A673 (cell line): ENCODE measurements at regions of chr6 and their contacts with region 1.

Region 1: DNA sequence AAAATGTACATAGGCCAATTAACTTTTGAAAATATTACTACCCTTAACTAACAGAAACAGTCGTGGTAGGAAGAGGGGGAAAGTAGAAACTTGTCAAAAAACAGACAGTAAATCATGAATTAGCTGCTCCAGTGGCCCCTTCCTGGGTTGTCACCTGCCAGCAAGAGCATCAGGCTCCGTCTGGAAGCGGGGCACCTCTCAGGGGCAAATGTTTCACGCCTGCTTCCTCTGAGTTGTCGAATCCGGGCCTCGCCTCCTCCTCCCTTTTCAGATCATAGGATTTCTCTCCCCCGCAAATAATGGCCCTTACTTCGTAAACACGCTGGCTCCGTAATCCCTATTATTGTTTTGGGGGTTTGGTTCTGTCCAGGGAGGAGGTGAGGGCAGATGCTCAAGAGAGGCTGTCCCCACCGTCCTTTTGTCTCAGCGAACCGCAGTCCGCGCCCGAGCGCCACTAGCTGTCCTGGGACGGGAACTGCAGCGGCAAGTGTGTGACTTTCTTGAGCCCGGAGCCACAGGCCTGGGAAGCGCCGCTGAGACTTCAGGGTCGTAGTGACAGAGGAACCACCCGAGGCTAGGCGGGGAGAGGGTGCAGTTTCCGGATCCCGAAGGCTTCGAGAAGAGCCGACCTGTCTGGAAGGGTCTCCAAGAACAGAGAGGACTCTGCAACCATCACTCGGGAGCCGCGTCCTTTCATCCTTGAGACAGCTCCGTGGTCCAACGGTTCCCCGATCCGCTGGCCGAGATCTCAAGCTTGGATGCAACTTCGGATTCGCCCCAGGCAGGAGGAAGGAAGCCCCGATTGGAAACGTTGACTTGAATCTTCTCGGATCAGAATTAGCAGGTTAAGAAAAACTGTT is 214.5 kb upstream of the ZNF184 start:
- DNase-seq: peak; percentile 94
- H3K4me3 ChIP-seq: peak overlapping the region; percentile 57
- H3K27ac ChIP-seq: peak overlapping the region; percentile 66
- H3K4me1 ChIP-seq: no peaks in the 10 kb centered on the region
- H3K27me3 ChIP-seq: no peaks in the 10 kb centered on the region
- CTCF ChIP-seq: peak; percentile 84

Region 2: DNA sequence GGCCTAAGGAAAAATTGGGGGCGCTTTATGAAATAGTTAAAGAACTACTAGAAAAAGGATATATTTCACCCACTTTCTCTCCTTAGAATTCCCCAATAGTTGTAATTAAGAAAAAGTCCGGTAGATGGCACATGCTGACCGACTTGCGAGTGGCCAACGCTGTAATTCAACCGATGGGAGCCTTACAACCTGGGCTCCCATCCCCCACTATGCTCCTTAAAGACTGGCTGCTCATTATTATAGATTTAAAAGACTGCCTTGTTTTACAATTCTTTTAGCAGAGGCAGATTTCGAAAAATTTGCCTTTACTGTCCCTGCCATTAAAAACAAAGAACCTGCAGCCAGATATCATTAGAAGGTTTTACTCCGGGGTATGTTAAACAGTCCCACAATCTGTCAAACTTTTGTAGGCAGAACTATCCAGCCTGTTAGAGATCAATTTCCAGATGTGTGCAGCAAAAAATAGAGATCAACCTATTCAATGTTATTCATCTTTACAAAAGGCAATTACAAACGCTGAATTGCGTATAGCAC is 498.4 kb before region 1 on chr6:
- CTCF ChIA-PET with region 1: no interaction called
- POLR2A ChIA-PET with region 1: no interaction called
- intact Hi-C with region 1: loop called (anchors 10 kb)
- DNase-seq: peak; percentile 87
- H3K4me3 ChIP-seq: peak overlapping the region; percentile 59
- H3K27ac ChIP-seq: peak overlapping the region; percentile 5
- H3K4me1 ChIP-seq: no peaks in the 10 kb centered on the region
- H3K27me3 ChIP-seq: no peaks in the 10 kb centered on the region
- CTCF ChIP-seq: peak; percentile 67

Region 3: DNA sequence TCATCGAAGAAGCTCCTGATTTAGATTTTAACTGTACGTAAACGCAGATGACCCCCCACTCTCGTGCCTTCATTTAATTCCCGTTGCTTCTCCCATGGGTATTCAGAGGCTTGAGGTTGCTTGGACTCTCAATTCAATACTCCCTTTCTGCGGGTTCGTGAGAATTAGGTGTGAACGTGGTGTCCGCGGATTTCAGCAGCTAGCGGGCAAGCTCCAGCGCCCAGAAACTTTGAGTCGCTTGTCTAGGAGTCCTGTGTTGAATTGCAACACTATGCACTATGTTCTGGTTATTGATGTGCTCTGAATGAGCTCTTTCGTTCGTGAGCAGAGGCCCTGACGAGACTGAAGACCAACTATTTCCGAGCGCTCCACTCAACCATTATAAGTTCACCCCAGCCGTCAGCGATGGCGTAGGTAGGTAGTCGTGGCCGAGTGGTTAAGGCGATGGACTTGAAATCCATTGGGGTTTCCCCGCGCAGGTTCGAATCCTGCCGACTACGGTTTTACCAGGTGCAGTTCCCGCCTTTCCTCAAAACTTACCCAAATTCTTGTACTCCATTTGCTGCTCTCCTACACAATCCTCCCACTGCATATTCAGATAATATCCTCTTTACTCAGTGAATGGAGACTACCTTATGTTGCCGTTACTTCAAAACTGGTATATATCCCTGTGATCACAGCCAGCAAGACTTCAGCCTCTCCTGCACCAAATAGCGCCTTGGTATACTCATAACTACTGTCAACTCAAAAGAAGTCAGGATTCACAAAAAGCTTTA is 141.9 kb before region 1 on chr6:
- CTCF ChIA-PET with region 1: no interaction called
- POLR2A ChIA-PET with region 1: no interaction called
- intact Hi-C with region 1: loop called (anchors 5 kb)
- DNase-seq: peak; percentile 87
- H3K4me3 ChIP-seq: peak overlapping the region; percentile 48
- H3K27ac ChIP-seq: no peak overlapping the region
- H3K4me1 ChIP-seq: no peaks in the 10 kb centered on the region
- H3K27me3 ChIP-seq: no peaks in the 10 kb centered on the region
- CTCF ChIP-seq: no peak

Region 4: DNA sequence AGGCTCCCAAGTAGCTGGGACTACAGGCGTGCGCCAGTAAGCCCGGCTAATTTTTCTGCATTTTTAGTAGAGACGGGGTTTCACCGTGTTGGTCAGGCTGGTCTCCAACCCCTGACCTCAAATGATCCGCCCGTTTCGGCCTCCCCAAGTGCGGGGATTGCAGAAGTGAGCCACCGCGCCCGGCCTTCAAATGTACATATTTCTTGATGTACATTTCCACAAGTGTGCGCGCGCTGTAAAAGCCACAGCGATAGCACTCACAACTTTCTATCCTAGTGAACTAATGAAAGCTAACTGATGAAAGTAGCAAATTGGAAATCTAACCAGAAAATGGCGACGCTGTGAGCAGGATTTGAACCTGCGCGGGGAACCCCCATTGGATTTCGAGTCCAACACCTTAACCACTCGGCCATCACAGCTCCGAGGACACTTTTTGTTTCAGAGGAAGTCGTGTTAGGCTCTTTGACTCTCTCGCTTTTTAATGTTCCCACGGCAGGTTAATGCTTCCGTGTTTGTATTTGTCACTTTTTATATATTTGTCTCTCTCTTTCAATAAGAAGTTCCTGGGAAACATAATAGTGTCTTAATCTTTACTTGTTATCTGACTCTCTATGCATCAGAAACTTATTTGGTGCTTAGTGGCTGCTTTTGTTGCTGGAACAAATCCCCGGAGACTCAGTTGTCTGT is 15.1 kb before region 1 on chr6:
- CTCF ChIA-PET with region 1: no interaction called
- POLR2A ChIA-PET with region 1: interaction called, 12 read pairs
- intact Hi-C with region 1: no loop called
- DNase-seq: peak; percentile 92
- H3K4me3 ChIP-seq: peak overlapping the region; percentile 52
- H3K27ac ChIP-seq: peak overlapping the region; percentile 3
- H3K4me1 ChIP-seq: peaks cover 6% of the 10 kb centered on the region
- H3K27me3 ChIP-seq: no peaks in the 10 kb centered on the region
- CTCF ChIP-seq: no peak